Heart right ventricle (tissue), 16 donors: ENCODE measurements at regions of chr10 and their contacts with region 1.

Region 1: GRCh38 chr10:72223743-72224101 is 7.6 kb upstream of the ASCC1 start:
- DNase-seq: no peak
- ATAC-seq: peak in 3 of 8 donors; percentile 37 to 49 (median 48)
- H3K4me3 ChIP-seq: no peak overlapping the region
- H3K27ac ChIP-seq: peak overlapping the region in 9 of 10 donors; percentile 9 to 86 (median 59)
- H3K4me1 ChIP-seq: peaks cover 0 to 51% (median 34%) of the 10 kb centered on the region in 9 donors
- H3K27me3 ChIP-seq: no peaks in the 10 kb centered on the region
- CTCF ChIP-seq: no peak

Region 2: DNA sequence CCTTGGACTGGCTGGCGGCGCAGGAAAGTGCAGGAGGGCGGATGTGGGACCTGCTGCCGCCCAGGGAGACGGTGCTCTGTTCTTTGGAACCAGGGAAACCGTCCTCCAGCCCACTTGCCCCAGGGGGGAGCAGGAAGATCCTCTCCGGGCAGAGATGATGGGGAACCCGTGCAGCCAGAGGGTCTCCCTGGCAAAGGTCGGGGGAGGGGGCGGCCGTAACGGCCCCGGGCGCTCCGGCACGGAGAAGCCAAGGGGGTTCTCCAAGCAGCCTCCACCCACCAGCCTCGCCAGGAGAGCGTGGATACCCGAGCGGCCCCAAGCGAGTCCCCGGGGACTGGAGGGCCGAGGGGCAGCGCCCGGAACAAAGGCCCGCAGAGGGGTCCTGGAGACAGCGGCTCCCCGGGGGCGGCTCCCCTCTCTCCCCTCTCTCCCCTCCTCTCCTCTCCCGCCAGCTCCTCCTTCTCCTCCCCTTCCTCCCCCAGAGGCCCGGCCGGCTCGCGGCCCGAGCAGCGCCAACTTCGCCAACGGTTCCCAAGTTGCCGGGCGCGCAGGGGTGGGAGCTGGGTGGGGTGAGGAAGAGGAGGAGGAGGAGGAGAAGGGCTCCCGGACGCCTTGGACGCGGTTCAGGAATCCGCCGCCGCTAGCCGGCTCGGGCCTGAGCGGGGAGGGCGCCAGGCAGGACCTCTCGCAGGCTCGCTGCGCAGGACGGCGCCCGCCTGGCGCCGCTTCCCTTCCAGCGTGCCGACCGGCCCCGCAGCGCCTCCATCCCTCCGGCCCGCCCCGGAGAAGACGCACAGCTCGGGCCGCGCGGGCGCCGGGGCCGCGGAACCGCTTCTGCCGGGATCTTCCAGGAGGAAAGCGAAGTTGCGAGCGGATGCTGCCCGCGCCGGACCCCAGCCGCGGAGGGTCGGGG is 259.7 kb before region 1 on chr10 and contains the start of gene CHST3:
- intact Hi-C with region 1: loop called in 5 of 10 experiments (anchors 5 to 10 kb)
- DNase-seq: peak; percentile 85 to 88
- ATAC-seq: peak; percentile 77 to 91 (median 86)
- H3K4me3 ChIP-seq: peak within 1 kb of the TSS; percentile 67 to 95 (median 84)
- H3K27ac ChIP-seq: peak within 1 kb of the TSS; percentile 92 to 100 (median 98)
- H3K4me1 ChIP-seq: peaks cover 11 to 58% (median 44%) of the 10 kb centered on the region in 9 donors
- H3K27me3 ChIP-seq: peaks cover 0 to 28% (median 0%) of the 10 kb centered on the region in 7 donors
- CTCF ChIP-seq: peak in 2 of 9 donors; percentile 3 to 27
- total RNA-seq, gene CHST3: 14.5 to 28.7 (median 21.3) TPM

Region 3: GRCh38 chr10:72058989-72059842 is 164.5 kb before region 1 on chr10:
- intact Hi-C with region 1: loop called in 5 of 10 experiments (anchors 10 kb)
- DNase-seq: no peak
- ATAC-seq: no peak
- H3K4me3 ChIP-seq: no peak overlapping the region
- H3K27ac ChIP-seq: peak overlapping the region in 1 of 10 donors; percentile 26
- H3K4me1 ChIP-seq: peaks cover 0 to 17% (median 4%) of the 10 kb centered on the region in 9 donors
- H3K27me3 ChIP-seq: no peaks in the 10 kb centered on the region
- CTCF ChIP-seq: no peak

Region 4: DNA sequence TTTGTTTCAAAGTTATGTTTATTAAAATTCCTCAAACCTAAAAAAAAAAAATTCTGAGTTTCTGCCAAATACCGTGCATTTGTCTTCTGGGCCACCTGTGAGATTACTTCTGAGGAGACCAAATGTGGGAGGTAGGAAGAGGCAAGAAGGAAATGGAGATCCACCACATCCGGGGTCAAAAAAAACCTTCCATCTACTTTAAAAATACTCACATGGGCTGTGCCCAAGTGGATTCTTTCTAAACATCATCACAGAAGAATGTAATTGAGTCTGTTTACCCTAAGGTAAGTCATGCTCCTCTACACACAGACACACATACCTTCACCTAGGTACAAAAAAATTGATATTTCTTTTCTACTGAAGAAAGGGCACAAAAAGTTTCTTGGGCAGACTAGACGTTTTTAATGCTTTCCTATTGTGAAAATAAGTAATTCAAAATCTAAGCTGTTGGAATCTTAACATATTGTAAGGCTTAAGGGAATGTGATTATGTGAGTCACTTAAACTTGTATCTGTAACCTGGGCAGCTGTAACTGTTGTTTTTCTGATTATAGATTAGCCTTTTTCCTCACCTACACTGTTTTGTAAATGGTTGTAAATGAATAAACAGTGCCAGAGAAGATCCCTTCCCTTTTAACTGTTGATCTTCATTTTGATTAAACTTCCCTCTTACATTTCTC is 116.3 kb before region 1 on chr10:
- intact Hi-C with region 1: loop called in 1 of 10 experiments (anchors 10 kb)
- DNase-seq: no peak
- ATAC-seq: no peak
- H3K4me3 ChIP-seq: no peak overlapping the region
- H3K27ac ChIP-seq: peak overlapping the region in 5 of 10 donors; percentile 22 to 81 (median 33)
- H3K4me1 ChIP-seq: peaks cover 7 to 59% (median 33%) of the 10 kb centered on the region in 9 donors
- H3K27me3 ChIP-seq: no peaks in the 10 kb centered on the region
- CTCF ChIP-seq: no peak

Region 5: GRCh38 chr10:72133517-72133916 is 90.2 kb before region 1 on chr10:
- intact Hi-C with region 1: loop called in 8 of 10 experiments (anchors 5 to 10 kb)
- DNase-seq: no peak
- ATAC-seq: peak in 5 of 8 donors; percentile 26 to 57 (median 51)
- H3K4me3 ChIP-seq: no peak overlapping the region
- H3K27ac ChIP-seq: no peak overlapping the region
- H3K4me1 ChIP-seq: peaks cover 0 to 24% (median 4%) of the 10 kb centered on the region in 9 donors
- H3K27me3 ChIP-seq: no peaks in the 10 kb centered on the region
- CTCF ChIP-seq: no peak